ENCODE measurements at regions of chr16 and their contacts with region 1.

Region 1: DNA sequence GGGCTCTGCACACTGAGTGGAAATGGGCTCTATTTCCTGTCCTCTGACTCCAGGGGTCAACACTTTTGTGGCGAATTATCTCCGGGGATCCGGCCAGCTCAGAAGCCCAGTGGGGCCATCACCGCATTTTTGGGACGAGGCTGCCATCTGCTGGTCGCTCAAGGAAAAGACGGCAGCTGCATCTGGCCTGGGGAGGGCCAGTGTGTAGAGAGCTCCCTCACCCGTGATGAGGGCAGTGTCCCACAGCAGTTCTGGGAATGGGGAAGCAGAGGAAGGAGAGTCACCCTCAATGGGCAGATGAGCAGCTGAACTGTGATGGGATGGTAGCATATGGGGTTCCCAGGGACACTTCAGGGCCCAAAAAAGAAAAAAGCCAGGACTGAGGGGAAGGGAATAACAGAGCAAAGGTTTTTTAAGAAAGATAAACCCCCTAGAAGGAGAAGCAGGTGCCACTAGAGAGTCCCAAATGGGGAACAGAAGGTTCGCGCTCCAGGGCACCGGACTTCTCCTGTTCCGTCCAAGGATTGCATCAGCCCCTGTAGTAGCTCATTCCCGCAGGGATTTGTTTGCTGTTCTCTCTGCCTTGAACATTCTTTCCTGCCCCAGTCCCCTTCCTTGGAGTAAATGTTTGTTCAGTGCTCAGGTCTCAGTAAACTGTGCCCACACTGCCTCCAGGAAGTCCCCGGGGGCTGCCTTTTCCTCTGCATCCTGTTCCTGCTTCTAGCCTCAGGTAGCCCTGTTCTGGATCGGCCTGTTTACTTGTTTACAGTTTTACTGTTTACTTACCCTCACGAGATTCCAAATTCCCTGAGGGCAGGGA is 9.3 kb upstream of the ABCC12 start:
- DNase-seq: peak; percentile 78
- H3K4me3 Mint-ChIP-seq: peak overlapping the region; percentile 2
- H3K27ac Mint-ChIP-seq: no peak overlapping the region
- H3K4me1 Mint-ChIP-seq: peaks cover 5% of the 10 kb centered on the region
- H3K27me3 Mint-ChIP-seq: no peaks in the 10 kb centered on the region
- CTCF ChIP-seq: peak; percentile 85

Region 2: DNA sequence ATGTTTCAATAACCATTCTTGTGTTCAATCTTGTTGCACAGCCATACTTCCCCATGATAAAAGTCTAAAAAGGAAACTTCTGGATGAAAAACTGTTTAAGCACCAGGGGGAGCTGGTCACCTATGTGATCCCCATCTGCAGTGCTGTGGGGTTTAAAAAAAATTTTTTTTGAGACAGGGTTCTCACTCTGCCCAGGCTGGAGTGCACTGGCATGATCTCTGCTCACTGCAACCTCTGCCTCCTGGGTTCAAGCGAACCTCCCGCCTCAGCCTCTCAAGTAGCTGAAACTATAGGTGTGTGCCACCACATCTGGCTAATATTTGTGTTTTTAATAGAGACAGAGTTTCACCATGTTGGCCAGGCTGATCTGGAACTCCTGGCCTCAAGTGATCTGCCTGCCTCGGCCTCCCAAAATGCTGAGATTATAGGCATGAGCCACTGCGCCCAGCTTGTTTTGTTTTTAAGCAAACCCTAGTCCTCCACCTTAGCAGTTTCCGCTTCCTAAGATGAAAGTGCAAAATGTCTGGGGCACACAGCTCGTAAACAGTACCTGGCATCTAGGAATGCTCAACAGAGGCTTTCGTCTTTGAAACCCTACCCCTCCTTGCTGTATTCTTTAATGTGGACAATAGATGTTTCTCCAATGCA is 1217.1 kb before region 1 on chr16:
- CTCF ChIA-PET with region 1: interaction called, 16 read pairs
- POLR2A ChIA-PET with region 1: no interaction called
- intact Hi-C with region 1: loop called (anchors 1 kb)
- DNase-seq: peak; percentile 57
- H3K4me3 Mint-ChIP-seq: no peak overlapping the region
- H3K27ac Mint-ChIP-seq: no peak overlapping the region
- H3K4me1 Mint-ChIP-seq: no peaks in the 10 kb centered on the region
- H3K27me3 Mint-ChIP-seq: no peaks in the 10 kb centered on the region
- CTCF ChIP-seq: peak; percentile 61

Region 3: DNA sequence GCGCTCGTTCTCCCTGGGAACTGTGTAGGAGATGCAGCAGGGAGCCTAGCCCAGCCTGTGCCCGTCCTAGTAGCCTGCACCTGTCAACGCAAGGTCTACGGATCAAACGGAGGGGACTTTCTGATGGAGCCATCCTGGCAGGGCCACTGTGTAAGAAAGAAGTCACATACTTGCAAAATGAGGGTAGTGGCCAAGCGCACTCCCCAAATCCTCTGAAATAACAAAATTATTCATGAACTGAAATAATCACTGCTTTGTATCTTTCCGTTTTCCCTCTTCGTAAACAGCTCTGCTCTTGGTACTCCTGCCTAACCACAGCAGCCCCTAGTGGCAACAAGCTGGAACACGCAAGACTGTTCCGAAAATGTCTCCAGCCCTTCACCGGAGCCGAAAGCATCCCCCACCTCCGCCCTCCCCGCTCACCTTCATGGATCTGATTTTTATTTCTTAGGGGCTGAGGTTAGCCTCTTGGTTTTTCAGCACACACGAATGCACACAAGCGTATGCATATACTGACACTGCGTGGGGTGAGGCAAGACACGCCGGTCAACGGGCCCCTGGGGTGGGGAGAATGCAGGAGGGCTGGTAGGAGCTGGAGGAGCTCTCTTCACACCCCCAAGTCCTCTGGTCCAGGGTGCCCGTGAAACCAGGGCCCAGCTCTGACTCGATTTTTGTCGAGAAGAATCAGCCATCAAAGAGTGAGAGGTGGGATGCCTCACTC is 110.1 kb before region 1 on chr16:
- CTCF ChIA-PET with region 1: no interaction called
- POLR2A ChIA-PET with region 1: no interaction called
- intact Hi-C with region 1: loop called (anchors 2 kb)
- DNase-seq: peak; percentile 55
- H3K4me3 Mint-ChIP-seq: no peak overlapping the region
- H3K27ac Mint-ChIP-seq: no peak overlapping the region
- H3K4me1 Mint-ChIP-seq: peaks cover 10% of the 10 kb centered on the region
- H3K27me3 Mint-ChIP-seq: no peaks in the 10 kb centered on the region
- CTCF ChIP-seq: peak; percentile 89

Region 4: GRCh38 chr16:48182979-48183537 is 17.9 kb after region 1 on chr16:
- CTCF ChIA-PET with region 1: interaction called, 16 read pairs
- POLR2A ChIA-PET with region 1: interaction called, 6 read pairs
- intact Hi-C with region 1: no loop called
- DNase-seq: no peak
- H3K4me3 Mint-ChIP-seq: no peak overlapping the region
- H3K27ac Mint-ChIP-seq: no peak overlapping the region
- H3K4me1 Mint-ChIP-seq: no peaks in the 10 kb centered on the region
- H3K27me3 Mint-ChIP-seq: no peaks in the 10 kb centered on the region
- CTCF ChIP-seq: no peak

Region 5: DNA sequence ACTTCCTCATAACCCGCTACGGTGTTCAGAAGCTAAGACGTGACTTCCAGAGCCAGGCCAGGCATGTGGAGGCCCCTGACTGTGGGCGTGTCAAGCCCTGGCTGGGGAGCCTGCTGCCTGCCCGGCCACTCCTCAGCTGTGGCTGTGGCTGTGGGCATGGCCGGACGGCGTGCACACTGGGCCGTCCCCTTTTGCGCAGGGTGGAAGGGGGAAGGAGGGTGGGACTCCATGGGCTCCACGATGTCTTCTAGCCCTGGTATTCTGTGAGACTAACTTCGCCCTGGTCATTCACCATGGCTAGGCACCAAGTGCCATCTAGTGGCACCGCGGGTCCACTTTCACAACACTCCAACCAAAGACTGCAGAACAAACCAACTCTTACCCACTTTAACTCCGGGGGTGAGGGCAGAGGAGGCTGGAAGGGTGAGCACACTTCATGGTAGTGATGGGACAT is 376.9 kb after region 1 on chr16:
- CTCF ChIA-PET with region 1: interaction called, 3 read pairs
- POLR2A ChIA-PET with region 1: no interaction called
- intact Hi-C with region 1: loop called (anchors 5 kb)
- DNase-seq: peak; percentile 47
- H3K4me3 Mint-ChIP-seq: no peak overlapping the region
- H3K27ac Mint-ChIP-seq: peak overlapping the region; percentile 63
- H3K4me1 Mint-ChIP-seq: no peaks in the 10 kb centered on the region
- H3K27me3 Mint-ChIP-seq: no peaks in the 10 kb centered on the region
- CTCF ChIP-seq: peak; percentile 35

Measured in MCF 10A (cell line).